Naive thymus-derived CD4-positive, alpha-beta T cell (primary cell): ENCODE measurements at regions of chr9 and their contacts with region 1.

Region 1: DNA sequence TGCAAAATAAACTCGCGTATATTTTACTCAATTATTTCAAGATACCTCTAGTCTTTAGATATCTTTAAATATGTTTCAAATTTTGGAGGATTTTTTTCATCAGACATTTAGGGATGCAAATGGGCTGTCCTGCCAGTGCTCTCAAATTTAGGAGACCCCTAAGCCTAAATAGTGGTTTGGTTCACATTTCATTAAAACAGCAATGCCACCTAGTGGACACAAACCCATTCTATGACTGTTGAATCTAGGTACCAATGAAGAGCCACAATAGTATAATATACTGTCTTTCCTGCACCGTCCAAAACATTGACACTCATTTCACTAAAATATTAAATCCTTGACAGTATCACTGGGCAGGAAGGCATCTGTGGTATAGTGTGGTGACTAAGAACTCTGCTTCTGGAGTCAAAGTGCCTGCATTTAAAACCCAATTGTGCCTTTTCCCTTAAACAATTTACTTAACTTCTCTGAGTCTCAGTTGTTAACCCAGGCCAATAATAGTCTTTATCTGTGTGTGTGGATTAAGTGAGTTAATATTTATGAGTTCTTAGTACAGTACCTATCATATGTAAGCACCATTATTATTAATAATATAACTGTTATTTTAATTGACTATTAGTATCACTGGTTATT is 148.0 kb downstream of the RORB start:
- DNase-seq: no peak
- ATAC-seq: no peak
- H3K4me3 ChIP-seq: no peak overlapping the region
- H3K4me3 Mint-ChIP-seq: no peak overlapping the region
- H3K27ac ChIP-seq: no peak overlapping the region
- H3K27ac Mint-ChIP-seq: no peak overlapping the region
- H3K4me1 ChIP-seq: no peaks in the 10 kb centered on the region
- H3K4me1 Mint-ChIP-seq: no peaks in the 10 kb centered on the region
- H3K27me3 ChIP-seq: no peaks in the 10 kb centered on the region
- H3K27me3 Mint-ChIP-seq: peaks cover 0 to 20% (median 4%) of the 10 kb centered on the region in 5 donors

Region 2: GRCh38 chr9:73200694-73201452 is 1444.2 kb before region 1 on chr9:
- CTCF ChIA-PET with region 1: no interaction called
- POLR2A ChIA-PET with region 1: no interaction called
- intact Hi-C with region 1: loop called in 1 of 2 experiments (anchors 10 kb)
- DNase-seq: peak in 3 of 9 donors; percentile 14 to 34 (median 17)
- ATAC-seq: no peak
- H3K4me3 ChIP-seq: no peak overlapping the region
- H3K4me3 Mint-ChIP-seq: no peak overlapping the region
- H3K27ac ChIP-seq: no peak overlapping the region
- H3K27ac Mint-ChIP-seq: no peak overlapping the region
- H3K4me1 ChIP-seq: no peaks in the 10 kb centered on the region
- H3K4me1 Mint-ChIP-seq: peaks cover 0 to 2% (median 0%) of the 10 kb centered on the region in 7 donors
- H3K27me3 ChIP-seq: peaks cover 0 to 6% of the 10 kb centered on the region in 2 donors
- H3K27me3 Mint-ChIP-seq: peaks cover 4 to 20% (median 12%) of the 10 kb centered on the region in 5 donors

Region 3: DNA sequence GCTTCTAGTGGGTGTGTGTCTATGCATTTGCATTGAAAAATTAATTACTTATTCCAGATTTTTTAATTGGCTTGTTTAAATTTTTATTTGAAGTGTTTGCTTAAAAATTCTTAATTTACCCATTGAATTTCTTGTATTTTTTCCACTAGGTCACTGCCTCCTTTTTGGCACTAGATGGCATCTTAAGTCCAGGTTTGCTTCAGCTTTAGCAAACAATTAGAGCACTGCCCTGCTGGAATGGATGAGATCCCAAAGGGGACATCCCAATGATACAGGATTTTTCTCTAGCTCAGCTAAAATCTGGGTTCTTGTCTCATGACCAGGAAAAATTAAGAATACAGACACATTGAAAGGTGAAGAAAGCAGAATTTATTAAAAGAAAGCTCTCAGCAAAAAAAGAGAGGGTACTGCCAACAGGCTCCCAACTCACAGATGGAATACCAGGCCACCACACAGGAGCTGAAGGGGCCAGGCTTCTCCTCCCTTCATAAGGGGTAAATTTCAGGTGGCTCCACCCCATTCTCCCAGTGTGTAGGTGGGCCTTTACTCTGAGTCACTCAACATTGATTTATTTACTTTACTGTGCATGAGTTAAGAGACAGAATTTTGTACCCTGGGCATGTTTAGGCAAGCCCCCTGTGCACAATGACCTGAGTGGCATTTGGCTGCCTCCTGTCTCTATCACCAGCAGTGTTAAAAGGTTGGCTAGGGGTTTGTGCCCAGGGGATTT is 961.1 kb before region 1 on chr9:
- CTCF ChIA-PET with region 1: no interaction called
- POLR2A ChIA-PET with region 1: no interaction called
- intact Hi-C with region 1: loop called in 1 of 2 experiments (anchors 10 kb)
- DNase-seq: no peak
- ATAC-seq: no peak
- H3K4me3 ChIP-seq: no peak overlapping the region
- H3K4me3 Mint-ChIP-seq: no peak overlapping the region
- H3K27ac ChIP-seq: no peak overlapping the region
- H3K27ac Mint-ChIP-seq: no peak overlapping the region
- H3K4me1 ChIP-seq: no peaks in the 10 kb centered on the region
- H3K4me1 Mint-ChIP-seq: no peaks in the 10 kb centered on the region
- H3K27me3 ChIP-seq: no peaks in the 10 kb centered on the region
- H3K27me3 Mint-ChIP-seq: no peaks in the 10 kb centered on the region

Region 4: DNA sequence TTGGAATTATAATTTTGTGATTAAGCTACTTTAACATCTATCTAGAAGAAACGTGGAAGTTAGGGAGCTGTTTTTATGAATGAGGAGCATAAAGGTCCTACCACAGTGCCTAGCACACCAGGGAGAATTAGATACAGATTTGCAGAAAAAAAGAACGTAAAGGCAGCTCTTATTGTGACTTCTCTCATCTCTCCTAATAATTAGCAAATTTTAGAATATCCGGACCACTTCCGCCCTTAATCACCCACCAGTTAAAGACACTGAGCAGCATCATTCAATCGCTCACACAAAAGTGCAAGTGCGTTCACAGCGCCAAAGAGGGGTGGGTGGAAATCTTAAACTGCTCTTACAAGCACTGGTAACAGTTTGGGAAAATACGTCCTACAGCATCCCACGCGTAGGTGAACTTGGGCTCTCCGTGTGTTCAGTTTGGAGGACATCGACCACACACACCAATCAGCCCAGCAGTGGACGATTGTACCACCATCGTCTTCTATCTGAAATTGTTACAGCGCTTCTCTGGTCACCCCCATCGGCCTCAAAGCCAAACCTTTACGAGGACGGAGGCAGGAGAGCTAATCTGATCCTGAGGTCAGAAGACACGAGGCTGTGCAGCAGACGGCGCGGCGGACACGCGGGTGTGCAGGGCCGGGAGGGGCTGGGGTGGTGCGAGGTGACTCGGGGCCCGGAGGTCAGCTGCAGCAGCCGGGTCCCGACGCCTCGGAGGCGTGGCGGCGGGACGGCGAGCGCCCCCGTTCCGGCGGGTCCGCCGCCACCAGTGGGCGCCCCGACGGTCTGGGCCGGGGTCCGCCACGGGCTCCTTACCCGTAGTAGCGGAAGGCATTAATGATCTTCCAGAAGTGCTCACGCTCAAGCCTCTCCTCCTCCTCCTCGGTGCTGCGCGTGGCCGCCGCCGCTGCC is 382.3 kb after region 1 on chr9:
- CTCF ChIA-PET with region 1: no interaction called
- POLR2A ChIA-PET with region 1: no interaction called
- intact Hi-C with region 1: no loop called
- DNase-seq: peak in 8 of 9 donors; percentile 27 to 66 (median 35)
- ATAC-seq: peak; percentile 18
- H3K4me3 ChIP-seq: peak overlapping the region; percentile 69
- H3K4me3 Mint-ChIP-seq: peak overlapping the region; percentile 80 to 98 (median 96)
- H3K27ac ChIP-seq: peak overlapping the region; percentile 90
- H3K27ac Mint-ChIP-seq: peak overlapping the region; percentile 84 to 98 (median 95)
- H3K4me1 ChIP-seq: peaks cover 34 to 42% of the 10 kb centered on the region in 2 donors
- H3K4me1 Mint-ChIP-seq: peaks cover 30 to 54% (median 48%) of the 10 kb centered on the region in 7 donors
- H3K27me3 ChIP-seq: no peaks in the 10 kb centered on the region
- H3K27me3 Mint-ChIP-seq: peaks cover 0 to 3% (median 0%) of the 10 kb centered on the region in 5 donors